ENCODE measurements at regions of chr6 and their contacts with region 1.

Region 1: GRCh38 chr6:11381801-11382513 is 149.5 kb upstream of the NEDD9 start:
- DNase-seq: peak; percentile 43 to 88 (median 82)
- ATAC-seq: peak; percentile 95
- H3K4me3 ChIP-seq: peak overlapping the region; percentile 70
- H3K4me3 Mint-ChIP-seq: peak overlapping the region; percentile 76 to 96 (median 91)
- H3K27ac ChIP-seq: peak overlapping the region; percentile 79
- H3K27ac Mint-ChIP-seq: peak overlapping the region; percentile 79 to 94 (median 91)
- H3K4me1 ChIP-seq: peaks cover 23 to 28% of the 10 kb centered on the region in 2 donors
- H3K4me1 Mint-ChIP-seq: peaks cover 42 to 85% (median 66%) of the 10 kb centered on the region in 7 donors
- H3K27me3 ChIP-seq: no peaks in the 10 kb centered on the region
- H3K27me3 Mint-ChIP-seq: no peaks in the 10 kb centered on the region

Region 2: DNA sequence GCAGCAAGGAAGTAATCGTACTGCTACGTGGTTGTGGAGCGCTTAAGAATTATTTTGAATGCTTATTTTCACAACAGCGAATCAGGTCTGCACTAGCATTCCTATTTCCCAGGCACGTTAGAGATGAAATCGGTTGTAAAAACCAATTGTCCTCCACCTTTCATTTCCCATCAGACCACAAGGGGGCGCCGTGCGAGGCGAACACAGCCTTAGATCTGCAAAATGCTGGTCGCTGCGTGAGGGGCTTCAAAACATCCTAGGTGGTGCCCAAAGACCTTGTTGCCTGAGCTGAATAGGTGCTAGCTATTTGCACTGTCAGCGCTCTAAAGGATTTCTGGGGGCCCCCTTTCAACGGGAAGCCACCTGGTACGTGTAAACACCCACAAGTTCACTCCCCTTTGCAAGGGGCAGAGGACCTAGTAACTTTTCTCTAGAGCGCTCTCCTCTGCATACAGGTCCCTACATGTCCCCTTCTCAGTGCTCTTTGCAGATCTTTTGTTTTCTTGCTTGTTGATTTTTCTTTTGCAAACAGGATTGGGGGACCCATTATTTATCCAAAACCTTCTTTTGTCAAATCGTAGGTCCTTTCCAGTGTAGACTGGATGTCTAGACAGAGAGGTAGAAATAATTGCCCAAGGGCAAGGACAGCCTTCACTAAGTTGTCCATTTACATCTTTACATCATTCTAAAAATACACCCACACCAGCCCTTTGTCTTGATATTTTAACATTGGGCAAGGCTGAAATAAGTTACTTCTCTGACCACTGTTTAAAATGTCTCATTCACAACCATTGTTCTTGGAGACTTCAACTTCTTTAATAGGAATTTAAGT is 209.2 kb before region 1 on chr6:
- CTCF ChIA-PET with region 1: interaction called, 9 read pairs
- POLR2A ChIA-PET with region 1: no interaction called
- intact Hi-C with region 1: loop called (anchors 1 kb)
- DNase-seq: peak; percentile 45 to 82 (median 68)
- ATAC-seq: peak; percentile 79
- H3K4me3 ChIP-seq: peak overlapping the region; percentile 25
- H3K4me3 Mint-ChIP-seq: peak overlapping the region in 8 of 10 donors; percentile 6 to 64 (median 53)
- H3K27ac ChIP-seq: no peak overlapping the region
- H3K27ac Mint-ChIP-seq: peak overlapping the region in 2 of 9 donors; percentile 12 to 16
- H3K4me1 ChIP-seq: peaks cover 6 to 10% of the 10 kb centered on the region in 2 donors
- H3K4me1 Mint-ChIP-seq: peaks cover 2 to 14% (median 10%) of the 10 kb centered on the region in 7 donors
- H3K27me3 ChIP-seq: no peaks in the 10 kb centered on the region
- H3K27me3 Mint-ChIP-seq: no peaks in the 10 kb centered on the region

Region 3: GRCh38 chr6:11258260-11259237 is 123.4 kb before region 1 on chr6:
- CTCF ChIA-PET with region 1: no interaction called
- POLR2A ChIA-PET with region 1: no interaction called
- intact Hi-C with region 1: loop called in 1 of 2 experiments (anchors 1 kb)
- DNase-seq: peak in 5 of 9 donors; percentile 5 to 24 (median 12)
- ATAC-seq: peak; percentile 83
- H3K4me3 ChIP-seq: peak overlapping the region; percentile 11
- H3K4me3 Mint-ChIP-seq: peak overlapping the region in 8 of 10 donors; percentile 6 to 65 (median 28)
- H3K27ac ChIP-seq: peak overlapping the region; percentile 6
- H3K27ac Mint-ChIP-seq: peak overlapping the region in 8 of 9 donors; percentile 37 to 84 (median 68)
- H3K4me1 ChIP-seq: peaks cover 16 to 58% of the 10 kb centered on the region in 2 donors
- H3K4me1 Mint-ChIP-seq: peaks cover 32 to 59% (median 44%) of the 10 kb centered on the region in 7 donors
- H3K27me3 ChIP-seq: no peaks in the 10 kb centered on the region
- H3K27me3 Mint-ChIP-seq: no peaks in the 10 kb centered on the region

Region 4: DNA sequence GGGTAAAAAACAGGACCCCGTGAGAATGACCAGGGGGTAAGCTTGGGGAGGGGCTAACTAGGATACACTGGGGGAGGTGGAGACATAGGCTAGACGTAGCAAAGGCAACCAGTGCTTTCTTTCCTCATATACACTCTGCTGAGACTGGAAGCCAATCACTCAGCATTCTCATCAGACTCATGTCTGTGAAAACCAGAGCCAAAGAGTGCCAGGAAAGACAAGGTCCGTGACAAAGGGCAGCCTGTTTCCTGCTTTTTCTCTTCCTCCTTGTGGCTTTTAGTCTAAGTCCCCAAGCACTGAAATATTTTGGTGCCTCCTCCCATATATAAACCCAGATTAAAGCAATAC is 51.6 kb before region 1 on chr6:
- CTCF ChIA-PET with region 1: no interaction called
- POLR2A ChIA-PET with region 1: no interaction called
- intact Hi-C with region 1: loop called (anchors 2 to 5 kb)
- DNase-seq: no peak
- ATAC-seq: peak; percentile 74
- H3K4me3 ChIP-seq: no peak overlapping the region
- H3K4me3 Mint-ChIP-seq: peak overlapping the region in 4 of 10 donors; percentile 39 to 60 (median 52)
- H3K27ac ChIP-seq: no peak overlapping the region
- H3K27ac Mint-ChIP-seq: peak overlapping the region in 7 of 9 donors; percentile 1 to 68 (median 55)
- H3K4me1 ChIP-seq: peaks cover 2 to 11% of the 10 kb centered on the region in 2 donors
- H3K4me1 Mint-ChIP-seq: peaks cover 48 to 79% (median 60%) of the 10 kb centered on the region in 7 donors
- H3K27me3 ChIP-seq: no peaks in the 10 kb centered on the region
- H3K27me3 Mint-ChIP-seq: no peaks in the 10 kb centered on the region

Region 5: GRCh38 chr6:11414176-11414963 is 32.4 kb after region 1 on chr6:
- CTCF ChIA-PET with region 1: interaction called, 6 read pairs
- POLR2A ChIA-PET with region 1: no interaction called
- intact Hi-C with region 1: loop called in 1 of 2 experiments (anchors 1 kb)
- DNase-seq: peak in 6 of 9 donors; percentile 11 to 30 (median 18)
- ATAC-seq: peak; percentile 77
- H3K4me3 ChIP-seq: no peak overlapping the region
- H3K4me3 Mint-ChIP-seq: no peak overlapping the region
- H3K27ac ChIP-seq: no peak overlapping the region
- H3K27ac Mint-ChIP-seq: peak overlapping the region in 1 of 9 donors; percentile 10
- H3K4me1 ChIP-seq: peaks cover 0 to 4% of the 10 kb centered on the region in 2 donors
- H3K4me1 Mint-ChIP-seq: peaks cover 6 to 45% (median 10%) of the 10 kb centered on the region in 7 donors
- H3K27me3 ChIP-seq: no peaks in the 10 kb centered on the region
- H3K27me3 Mint-ChIP-seq: no peaks in the 10 kb centered on the region

Region 6: GRCh38 chr6:11711003-11711983 is 329.3 kb after region 1 on chr6:
- CTCF ChIA-PET with region 1: no interaction called
- POLR2A ChIA-PET with region 1: no interaction called
- intact Hi-C with region 1: loop called in 1 of 2 experiments (anchors 10 kb)
- DNase-seq: peak in 8 of 9 donors; percentile 22 to 79 (median 38)
- ATAC-seq: peak; percentile 28
- H3K4me3 ChIP-seq: peak overlapping the region; percentile 13
- H3K4me3 Mint-ChIP-seq: peak overlapping the region; percentile 71 to 86 (median 75)
- H3K27ac ChIP-seq: peak overlapping the region; percentile 67
- H3K27ac Mint-ChIP-seq: peak overlapping the region; percentile 90 to 100 (median 97)
- H3K4me1 ChIP-seq: peaks cover 16 to 84% of the 10 kb centered on the region in 2 donors
- H3K4me1 Mint-ChIP-seq: peaks cover 55 to 92% (median 89%) of the 10 kb centered on the region in 7 donors
- H3K27me3 ChIP-seq: no peaks in the 10 kb centered on the region
- H3K27me3 Mint-ChIP-seq: no peaks in the 10 kb centered on the region

Region 7: DNA sequence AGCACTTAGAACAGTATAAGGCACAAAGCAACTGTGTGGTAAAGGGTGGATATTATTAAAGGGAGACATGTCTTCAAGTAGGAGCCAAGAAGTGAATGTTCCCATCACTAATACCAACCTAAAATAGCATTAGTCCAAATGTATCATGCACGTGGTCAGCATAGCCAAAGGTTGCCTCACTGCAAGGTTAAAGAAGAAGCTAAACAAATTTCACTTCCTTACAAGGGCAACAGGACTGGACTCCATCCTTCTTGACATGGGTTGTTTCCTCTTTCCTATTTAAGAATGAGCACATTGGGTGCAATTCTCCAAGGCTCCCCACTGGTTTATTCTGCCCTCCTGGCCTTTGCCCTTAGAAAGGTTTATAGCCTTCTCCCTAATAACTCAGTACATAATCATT is 1521.3 kb after region 1 on chr6:
- CTCF ChIA-PET with region 1: no interaction called
- POLR2A ChIA-PET with region 1: no interaction called
- intact Hi-C with region 1: no loop called
- DNase-seq: no peak
- ATAC-seq: peak; percentile 65
- H3K4me3 ChIP-seq: no peak overlapping the region
- H3K4me3 Mint-ChIP-seq: no peak overlapping the region
- H3K27ac ChIP-seq: no peak overlapping the region
- H3K27ac Mint-ChIP-seq: no peak overlapping the region
- H3K4me1 ChIP-seq: no peaks in the 10 kb centered on the region
- H3K4me1 Mint-ChIP-seq: no peaks in the 10 kb centered on the region
- H3K27me3 ChIP-seq: no peaks in the 10 kb centered on the region
- H3K27me3 Mint-ChIP-seq: peaks cover 15 to 42% (median 29%) of the 10 kb centered on the region in 5 donors